Sigmoid colon (tissue), 7 donors: ENCODE measurements at regions of chr12 and their contacts with region 1.

Region 1: DNA sequence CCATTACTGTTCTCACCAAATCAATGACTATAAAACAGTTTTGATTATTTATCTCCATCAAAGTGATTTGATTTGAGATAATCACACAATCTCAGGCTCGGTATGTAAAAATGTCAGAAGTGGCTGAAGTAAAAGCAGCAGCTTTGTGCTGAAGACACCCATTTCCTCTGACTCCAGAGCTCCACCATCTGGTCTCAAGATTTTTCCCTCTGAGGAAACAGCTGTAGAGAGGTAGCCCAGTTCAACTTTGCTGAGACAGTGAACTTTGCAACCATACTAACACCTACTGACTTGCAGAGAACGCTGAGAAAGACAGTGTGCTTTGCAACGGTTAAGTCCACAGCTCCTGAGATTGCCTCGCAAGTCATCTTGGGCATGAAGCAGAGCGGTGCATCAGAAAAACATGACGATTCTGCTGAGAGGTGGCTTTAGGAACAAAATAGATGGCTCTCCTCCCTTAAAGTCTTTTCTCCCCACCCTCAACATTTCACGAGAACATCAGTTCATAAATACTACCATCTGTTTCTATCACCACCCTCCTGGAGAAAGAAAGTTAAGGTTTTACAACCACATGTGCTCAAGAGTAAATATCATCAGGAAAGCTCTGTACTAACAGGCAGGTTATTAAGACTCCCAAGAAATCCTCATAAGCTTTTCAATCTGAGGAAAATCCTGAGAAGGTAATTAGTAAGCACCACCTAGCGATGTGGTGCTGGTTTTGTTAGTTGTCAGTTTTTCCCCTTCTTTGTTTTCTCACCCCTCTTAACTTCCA is 34.8 kb downstream of the HIGD1C start:
- DNase-seq: peak; percentile 71
- H3K4me3 ChIP-seq: no peak overlapping the region
- H3K27ac ChIP-seq: peak overlapping the region; percentile 59 to 83 (median 76)
- H3K4me1 ChIP-seq: peaks cover 0 to 33% (median 27%) of the 10 kb centered on the region in 4 donors
- H3K27me3 ChIP-seq: no peaks in the 10 kb centered on the region
- CTCF ChIP-seq: peak; percentile 28 to 64 (median 54)
- EP300 ChIP-seq: no peak
- POLR2A ChIP-seq: no peak

Region 2: GRCh38 chr12:50763639-50764285 is 223.4 kb before region 1 on chr12 and contains the start of gene ATF1:
- intact Hi-C with region 1: loop called (anchors 2 kb)
- DNase-seq: peak; percentile 96
- H3K4me3 ChIP-seq: peak within 1 kb of the TSS; percentile 95 to 99 (median 99)
- H3K27ac ChIP-seq: peak within 1 kb of the TSS; percentile 96 to 100 (median 99)
- H3K4me1 ChIP-seq: peaks cover 0 to 38% (median 33%) of the 10 kb centered on the region in 4 donors
- H3K27me3 ChIP-seq: no peaks in the 10 kb centered on the region
- CTCF ChIP-seq: no peak
- EP300 ChIP-seq: no peak
- POLR2A ChIP-seq: peak; percentile 68 to 71
- total RNA-seq, gene ATF1: 12.6 to 27.6 (median 20.8) TPM

Region 3: GRCh38 chr12:51270067-51270970 is 283.2 kb after region 1 on chr12 and contains the start of gene SMAGP:
- intact Hi-C with region 1: no loop called
- DNase-seq: peak; percentile 69
- H3K4me3 ChIP-seq: peak within 1 kb of the TSS; percentile 50 to 81 (median 60)
- H3K27ac ChIP-seq: peak within 1 kb of the TSS in 3 of 4 donors; percentile 60 to 68 (median 61)
- H3K4me1 ChIP-seq: peaks cover 0 to 19% (median 8%) of the 10 kb centered on the region in 4 donors
- H3K27me3 ChIP-seq: peaks cover 0 to 34% (median 11%) of the 10 kb centered on the region in 3 donors
- CTCF ChIP-seq: no peak
- EP300 ChIP-seq: no peak
- POLR2A ChIP-seq: peak in 1 of 2 donors; percentile 27
- total RNA-seq, gene SMAGP: 1.9 to 5.3 (median 3.4) TPM